K562 (cell line): ENCODE measurements at regions of chr18 and their contacts with region 1.

Region 1: GRCh38 chr18:48675352-48675761 is 136.5 kb downstream of the CTIF start:
- DNase-seq: peak; percentile 73 to 79 (median 77)
- ATAC-seq: peak; percentile 97
- H3K4me3 ChIP-seq: no peak overlapping the region
- H3K27ac ChIP-seq: no peak overlapping the region
- H3K4me1 ChIP-seq: peaks cover 0 to 7% of the 10 kb centered on the region in 2 experiments; a peak in 2 of 5 replicates
- H3K27me3 ChIP-seq: no peaks in the 10 kb centered on the region
- CTCF ChIP-seq: peak; percentile 78 to 82 (median 82)
- EP300 ChIP-seq: no peak
- POLR2A ChIP-seq: no peak
- RAD21 ChIP-seq: peak; percentile 69 to 87

Region 2: DNA sequence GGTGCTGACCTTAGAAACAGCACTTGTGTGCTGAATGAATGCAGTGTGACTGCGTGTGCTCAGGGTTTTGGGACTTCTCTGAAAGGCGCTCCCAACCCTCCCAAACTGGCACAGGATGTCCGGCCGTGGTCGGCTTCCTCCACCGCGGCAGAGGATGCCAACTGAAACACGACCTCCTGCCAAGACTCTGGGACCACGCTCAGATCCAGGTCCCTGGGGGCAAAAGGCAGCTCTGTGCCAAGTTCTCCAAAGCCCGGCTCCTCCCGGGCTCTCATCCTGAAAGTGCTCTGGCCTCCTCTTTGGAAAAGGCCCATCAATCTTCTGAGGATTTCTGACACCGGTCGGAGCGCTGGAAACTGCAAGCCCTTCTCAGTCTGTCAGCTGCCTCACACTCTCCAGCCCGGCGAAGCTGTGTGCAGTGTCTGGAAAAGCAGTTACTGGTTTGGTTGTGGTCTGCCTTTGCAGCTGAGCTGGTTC is 233.9 kb before region 1 on chr18:
- CTCF ChIA-PET with region 1: no interaction called
- POLR2A ChIA-PET with region 1: no interaction called
- in situ Hi-C with region 1: no loop called
- intact Hi-C with region 1: no loop called
- DNase-seq: no peak
- ATAC-seq: no peak
- H3K4me3 ChIP-seq: no peak overlapping the region
- H3K27ac ChIP-seq: no peak overlapping the region
- H3K4me1 ChIP-seq: no peaks in the 10 kb centered on the region
- H3K27me3 ChIP-seq: peaks cover 2 to 9% of the 10 kb centered on the region in 2 experiments; a peak in 2 of 5 replicates
- CTCF ChIP-seq: no peak
- EP300 ChIP-seq: no peak
- POLR2A ChIP-seq: no peak
- RAD21 ChIP-seq: no peak

Region 3: GRCh38 chr18:48771641-48772375 is 96.5 kb after region 1 on chr18:
- CTCF ChIA-PET with region 1: no interaction called
- POLR2A ChIA-PET with region 1: no interaction called
- in situ Hi-C with region 1: loop called (anchors 10 kb)
- intact Hi-C with region 1: loop called (anchors 2 kb)
- DNase-seq: no peak
- ATAC-seq: no peak
- H3K4me3 ChIP-seq: no peak overlapping the region
- H3K27ac ChIP-seq: no peak overlapping the region
- H3K4me1 ChIP-seq: peaks cover 0 to 7% of the 10 kb centered on the region in 2 experiments; a peak in 1 of 5 replicates
- H3K27me3 ChIP-seq: no peaks in the 10 kb centered on the region
- CTCF ChIP-seq: no peak
- EP300 ChIP-seq: no peak
- POLR2A ChIP-seq: no peak
- RAD21 ChIP-seq: no peak

Region 4: GRCh38 chr18:49021433-49022129 is 346.2 kb after region 1 on chr18:
- CTCF ChIA-PET with region 1: no interaction called
- POLR2A ChIA-PET with region 1: no interaction called
- in situ Hi-C with region 1: no loop called
- intact Hi-C with region 1: loop called (anchors 10 kb)
- DNase-seq: peak; percentile 38 to 70 (median 48)
- ATAC-seq: peak; percentile 94
- H3K4me3 ChIP-seq: no peak overlapping the region
- H3K27ac ChIP-seq: no peak overlapping the region
- H3K4me1 ChIP-seq: peaks cover 0 to 34% of the 10 kb centered on the region in 2 experiments; a peak in 3 of 5 replicates
- H3K27me3 ChIP-seq: no peaks in the 10 kb centered on the region
- CTCF ChIP-seq: peak; percentile 70 to 71 (median 70)
- EP300 ChIP-seq: no peak
- POLR2A ChIP-seq: no peak
- RAD21 ChIP-seq: peak; percentile 56 to 81

Region 5: GRCh38 chr18:49178736-49179135 is 503.4 kb after region 1 on chr18:
- CTCF ChIA-PET with region 1: no interaction called
- POLR2A ChIA-PET with region 1: no interaction called
- in situ Hi-C with region 1: loop called (anchors 25 kb)
- intact Hi-C with region 1: loop called (anchors 5 kb)
- DNase-seq: peak; percentile 19 to 52 (median 26)
- ATAC-seq: peak; percentile 55; the same call in 1 of the 3 replicates
- H3K4me3 ChIP-seq: no peak overlapping the region
- H3K27ac ChIP-seq: no peak overlapping the region
- H3K4me1 ChIP-seq: no peaks in the 10 kb centered on the region
- H3K27me3 ChIP-seq: no peaks in the 10 kb centered on the region
- CTCF ChIP-seq: peak; percentile 52 to 61 (median 58); a peak in 5 of 6 replicates
- EP300 ChIP-seq: no peak
- POLR2A ChIP-seq: no peak
- RAD21 ChIP-seq: peak; percentile 60 to 76

Region 6: DNA sequence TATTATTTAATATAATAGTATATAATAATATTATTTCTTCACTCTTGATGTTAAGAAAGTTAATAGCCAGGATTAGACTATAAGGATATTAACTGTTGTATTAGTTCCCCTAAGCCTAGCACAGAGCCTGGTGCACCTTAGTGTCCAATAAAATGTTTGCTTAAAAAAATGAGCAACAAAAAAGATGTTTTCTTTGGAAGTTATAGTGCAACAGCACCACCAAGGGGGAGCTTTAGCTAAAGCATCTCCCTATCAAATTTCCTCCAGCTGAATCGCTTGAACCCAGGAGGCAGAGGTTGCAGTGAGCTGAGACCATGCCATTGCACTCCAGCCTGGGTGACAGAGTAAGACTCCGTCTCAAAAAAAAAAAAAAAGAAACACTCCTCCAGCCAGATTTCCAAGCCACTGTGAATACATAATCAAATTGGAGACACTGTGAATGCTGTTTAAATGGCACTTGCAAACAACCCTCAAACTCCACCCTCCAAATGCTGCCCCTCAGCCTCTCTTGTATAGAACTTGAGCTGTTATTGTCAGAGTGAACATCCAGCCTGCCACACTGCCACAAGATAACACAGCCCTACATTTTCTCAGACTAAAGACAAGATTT is 563.2 kb after region 1 on chr18:
- CTCF ChIA-PET with region 1: interaction called, 3 read pairs
- POLR2A ChIA-PET with region 1: no interaction called
- in situ Hi-C with region 1: loop called (anchors 10 kb)
- intact Hi-C with region 1: loop called (anchors 5 kb)
- DNase-seq: peak in 3 of 4 experiments; percentile 6 to 29 (median 9)
- ATAC-seq: no peak
- H3K4me3 ChIP-seq: no peak overlapping the region
- H3K27ac ChIP-seq: no peak overlapping the region
- H3K4me1 ChIP-seq: no peaks in the 10 kb centered on the region
- H3K27me3 ChIP-seq: no peaks in the 10 kb centered on the region
- CTCF ChIP-seq: peak in 2 of 3 experiments; percentile 33 to 60; a peak in 2 of 6 replicates
- EP300 ChIP-seq: no peak
- POLR2A ChIP-seq: no peak
- RAD21 ChIP-seq: peak in 1 of 2 experiments; percentile 68

Region 7: DNA sequence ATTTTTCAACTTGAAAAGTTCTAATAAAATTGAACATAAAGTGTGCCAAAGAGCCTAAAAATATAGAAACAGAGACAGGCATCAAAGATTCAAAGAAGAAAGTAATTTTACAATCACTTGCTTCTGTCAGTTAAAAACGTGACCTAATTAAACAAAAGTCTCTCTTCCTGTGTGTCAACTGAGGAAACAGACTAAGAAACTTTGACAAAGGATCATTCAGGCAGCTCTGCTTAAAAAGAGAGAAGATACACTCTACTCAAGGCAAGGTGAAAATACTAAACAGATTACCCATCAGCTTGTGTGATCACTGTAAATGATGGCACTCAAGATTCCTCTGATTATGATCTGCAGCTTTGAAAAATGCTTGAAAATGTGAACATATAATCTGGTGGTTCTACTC is 737.3 kb after region 1 on chr18:
- CTCF ChIA-PET with region 1: no interaction called
- POLR2A ChIA-PET with region 1: no interaction called
- in situ Hi-C with region 1: no loop called
- intact Hi-C with region 1: loop called (anchors 10 kb)
- DNase-seq: no peak
- ATAC-seq: no peak
- H3K4me3 ChIP-seq: no peak overlapping the region
- H3K27ac ChIP-seq: no peak overlapping the region
- H3K4me1 ChIP-seq: no peaks in the 10 kb centered on the region
- H3K27me3 ChIP-seq: no peaks in the 10 kb centered on the region
- CTCF ChIP-seq: no peak
- EP300 ChIP-seq: no peak
- POLR2A ChIP-seq: no peak
- RAD21 ChIP-seq: no peak

Region 8: DNA sequence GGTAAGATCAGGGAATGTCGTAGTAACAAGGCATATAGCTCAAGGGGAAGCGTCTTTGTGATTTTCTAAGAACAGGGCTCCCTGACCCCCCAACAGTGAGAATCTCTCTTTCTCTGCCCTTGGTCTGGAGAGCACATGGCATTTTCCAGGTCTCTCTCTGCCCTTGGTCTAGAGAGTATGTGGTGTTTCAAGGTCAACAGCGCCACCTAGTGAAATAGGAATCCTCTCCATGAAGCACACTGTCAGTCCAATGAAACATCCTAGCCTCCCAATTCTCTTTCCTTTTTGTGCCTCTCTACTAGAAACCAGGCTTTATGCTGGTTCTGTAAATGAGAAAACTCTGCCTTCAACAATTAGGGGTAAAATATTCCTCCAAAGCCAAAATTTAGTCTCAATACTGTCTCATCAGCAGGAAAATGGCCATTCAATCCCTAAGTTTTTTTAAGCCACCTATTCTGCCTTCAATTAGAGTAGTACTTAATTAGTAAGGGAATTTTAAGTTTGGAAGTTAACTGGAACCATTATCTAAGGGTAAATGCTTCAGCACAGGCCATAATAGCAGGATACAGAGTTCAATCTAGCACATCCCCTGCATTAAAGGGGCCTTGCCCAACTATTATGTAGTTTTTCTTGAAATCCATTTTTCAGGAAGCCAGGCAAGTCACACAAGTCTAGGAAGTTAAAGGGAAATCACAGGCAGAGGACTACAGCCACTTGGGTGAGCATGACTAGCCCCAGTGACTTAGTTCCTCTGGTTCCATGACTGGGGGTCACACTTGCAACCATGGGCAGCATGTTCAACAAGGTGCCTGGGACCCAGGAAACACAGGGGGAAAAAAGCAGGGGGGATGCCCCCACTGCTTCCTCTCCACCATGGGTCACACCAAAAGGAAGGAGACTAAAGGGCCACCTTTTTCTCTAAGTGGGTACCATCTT is 772.7 kb after region 1 on chr18:
- CTCF ChIA-PET with region 1: no interaction called
- POLR2A ChIA-PET with region 1: no interaction called
- in situ Hi-C with region 1: loop called (anchors 25 kb)
- intact Hi-C with region 1: no loop called
- DNase-seq: peak; percentile 9 to 64 (median 12)
- ATAC-seq: peak; percentile 81
- H3K4me3 ChIP-seq: no peak overlapping the region
- H3K27ac ChIP-seq: no peak overlapping the region
- H3K4me1 ChIP-seq: no peaks in the 10 kb centered on the region
- H3K27me3 ChIP-seq: no peaks in the 10 kb centered on the region
- CTCF ChIP-seq: peak; percentile 19 to 43 (median 40); a peak in 4 of 6 replicates
- EP300 ChIP-seq: no peak
- POLR2A ChIP-seq: no peak
- RAD21 ChIP-seq: peak in 1 of 2 experiments; percentile 43; a peak in 2 of 4 replicates